ENCODE measurements at regions of chr22 and their contacts with region 1.

Region 1: DNA sequence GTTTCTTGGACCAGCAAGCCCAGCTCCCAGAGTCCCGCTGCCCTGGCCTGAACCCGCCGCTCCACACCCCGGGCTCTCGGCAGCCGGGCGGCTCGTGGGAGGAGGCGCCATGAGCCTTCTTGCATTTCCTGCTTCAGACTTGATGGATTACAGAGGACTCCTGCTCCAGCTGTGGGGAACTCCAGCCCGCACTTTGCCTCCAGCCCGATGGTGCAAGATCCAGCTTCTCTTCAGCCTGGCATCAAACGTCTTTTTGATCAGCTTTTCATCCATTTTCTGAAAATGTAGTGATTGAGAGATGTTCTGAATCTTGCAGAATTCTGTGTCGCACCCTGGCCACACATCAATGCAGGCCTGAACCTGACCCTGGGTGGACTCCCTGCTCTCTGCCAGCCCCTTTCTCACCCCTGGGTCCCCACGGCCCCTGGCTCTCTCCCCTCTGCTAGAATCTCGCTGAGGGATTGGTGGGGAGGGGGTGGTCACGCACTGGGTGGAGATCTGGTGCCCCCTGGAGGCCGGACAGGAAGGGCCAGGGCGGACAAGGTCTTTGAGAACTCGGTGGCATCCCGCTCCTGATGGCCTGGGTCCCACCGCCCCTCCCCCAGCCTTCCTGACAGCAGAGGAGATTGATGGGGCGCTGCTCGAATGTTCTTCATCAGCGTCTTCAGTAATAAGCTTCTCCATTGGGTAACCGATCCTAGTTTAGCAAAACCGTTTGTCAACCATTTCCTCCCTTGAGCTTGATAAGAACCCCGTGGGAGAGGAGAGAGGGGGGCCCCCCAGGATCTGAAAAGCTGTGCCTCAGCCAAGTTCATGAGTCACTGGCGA is 12.1 kb upstream of the NFAM1 start:
- DNase-seq: peak; percentile 67 to 74
- ATAC-seq: peak; percentile 84 to 90
- H3K4me3 ChIP-seq: peak overlapping the region; percentile 30
- H3K27ac ChIP-seq: peak overlapping the region; percentile 68 to 74
- H3K4me1 ChIP-seq: peaks cover 5% of the 10 kb centered on the region; the same call in 1 of the 3 replicates
- CTCF ChIP-seq: peak; percentile 63
- EP300 ChIP-seq: no peak
- POLR2A ChIP-seq: no peak
- RAD21 ChIP-seq: peak; percentile 73

Region 2: DNA sequence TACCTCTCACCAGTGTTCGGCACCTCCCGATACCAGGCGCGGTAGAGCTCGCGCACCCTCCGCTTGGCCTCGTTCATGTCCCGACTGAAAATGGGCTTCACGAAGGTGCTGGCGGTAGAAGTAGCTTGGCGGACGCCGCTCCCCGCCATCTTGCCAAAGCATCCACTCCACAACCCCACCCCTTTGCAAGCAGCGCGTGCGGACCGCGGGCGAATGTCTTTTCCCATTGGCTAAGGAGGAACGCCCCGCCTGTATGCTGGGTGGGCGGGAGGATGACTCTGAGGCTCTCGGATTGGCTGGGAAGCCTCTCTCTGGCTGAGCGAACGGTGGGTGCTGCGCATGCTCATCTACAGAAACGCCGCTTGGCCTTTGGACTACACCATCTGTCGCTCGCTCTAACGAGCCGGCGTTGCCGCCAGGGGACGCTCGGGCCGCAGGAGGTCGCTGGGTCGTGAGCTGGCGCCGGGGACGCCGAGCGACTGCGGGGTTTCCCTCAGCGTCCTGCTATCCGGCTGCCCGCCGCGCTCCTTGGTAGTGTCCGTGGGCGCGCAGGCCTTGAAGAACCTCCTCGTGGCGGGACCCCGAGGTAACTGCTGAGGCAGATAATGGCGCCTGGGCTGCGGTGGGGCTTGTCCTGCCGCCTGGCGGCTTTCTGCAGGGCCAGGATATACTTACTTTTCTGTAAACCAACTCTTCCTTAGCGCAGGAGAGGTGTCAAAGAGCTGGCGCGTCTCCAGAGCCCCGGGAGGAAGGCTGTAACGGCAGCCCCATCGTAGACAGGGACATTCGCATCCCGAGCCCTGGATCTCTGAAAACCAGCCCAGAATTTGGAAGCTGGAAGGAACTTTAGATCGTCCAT is 353.5 kb before region 1 on chr22 and contains the start of gene NDUFA6:
- CTCF ChIA-PET with region 1: interaction called, 32 read pairs
- POLR2A ChIA-PET with region 1: no interaction called
- DNase-seq: peak; percentile 91 to 98
- ATAC-seq: peak; percentile 96 to 98
- H3K4me3 ChIP-seq: peak within 1 kb of the TSS; percentile 70
- H3K27ac ChIP-seq: peak within 1 kb of the TSS; percentile 84 to 89
- H3K4me1 ChIP-seq: peaks cover 4% of the 10 kb centered on the region; the same call in 1 of the 3 replicates
- CTCF ChIP-seq: peak; percentile 87
- EP300 ChIP-seq: no peak
- POLR2A ChIP-seq: peak; percentile 88
- RAD21 ChIP-seq: peak; percentile 65 to 84
- polyA plus RNA-seq, gene NDUFA6: 70.7 and 99.0 TPM in 2 replicates

Region 3: GRCh38 chr22:42160830-42161696 is 283.2 kb before region 1 on chr22:
- CTCF ChIA-PET with region 1: interaction called, 14 read pairs
- POLR2A ChIA-PET with region 1: no interaction called
- DNase-seq: peak; percentile 28 to 81
- ATAC-seq: peak; percentile 49 to 68; a peak in 3 of 6 replicates
- H3K4me3 ChIP-seq: no peak overlapping the region
- H3K27ac ChIP-seq: peak overlapping the region; percentile 38 to 50; a peak in 3 of 6 replicates
- H3K4me1 ChIP-seq: peaks cover 13% of the 10 kb centered on the region
- CTCF ChIP-seq: no peak
- EP300 ChIP-seq: no peak
- POLR2A ChIP-seq: no peak
- RAD21 ChIP-seq: no peak

Region 4: GRCh38 chr22:42431401-42432019 is 12.8 kb before region 1 on chr22:
- CTCF ChIA-PET with region 1: interaction called, 16 read pairs
- POLR2A ChIA-PET with region 1: no interaction called
- DNase-seq: no peak
- ATAC-seq: no peak
- H3K4me3 ChIP-seq: no peak overlapping the region
- H3K27ac ChIP-seq: no peak overlapping the region
- H3K4me1 ChIP-seq: no peaks in the 10 kb centered on the region
- CTCF ChIP-seq: no peak
- EP300 ChIP-seq: no peak
- POLR2A ChIP-seq: no peak
- RAD21 ChIP-seq: no peak

Region 5: DNA sequence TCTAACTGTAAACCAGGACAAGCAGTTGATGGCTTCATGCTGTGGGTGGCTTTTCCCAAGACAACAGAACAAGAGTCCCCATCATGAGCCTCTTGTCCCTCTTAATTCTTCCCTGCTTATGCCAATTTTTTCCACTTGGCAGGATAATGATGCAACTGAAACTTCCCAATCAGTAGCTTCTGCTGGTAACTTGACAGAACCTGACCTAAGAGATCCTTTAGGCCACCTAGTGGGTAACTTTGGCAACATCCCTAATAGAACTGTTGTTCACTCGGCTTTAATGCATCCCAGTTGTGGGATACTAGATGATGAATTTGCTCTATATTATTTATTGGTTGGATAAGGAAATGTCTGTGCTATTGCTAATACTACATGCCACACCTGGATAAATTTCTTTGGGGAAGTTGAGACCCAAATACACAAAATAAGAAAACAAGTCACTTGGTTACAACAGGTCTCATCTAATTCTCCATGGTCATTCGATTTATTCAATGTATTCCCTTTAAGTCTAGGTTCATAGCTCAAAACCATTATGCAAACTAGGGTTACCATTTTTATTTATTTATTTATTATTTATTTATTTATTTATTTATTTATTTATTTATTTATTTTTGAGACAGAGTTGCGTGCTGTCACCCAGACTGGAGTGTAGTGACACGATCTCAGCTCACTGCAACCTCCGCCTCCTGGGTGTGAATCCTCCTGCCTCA is 29.3 kb after region 1 on chr22:
- CTCF ChIA-PET with region 1: interaction called, 16 read pairs
- POLR2A ChIA-PET with region 1: no interaction called
- DNase-seq: peak; percentile 43 to 62
- ATAC-seq: peak; percentile 83 to 93
- H3K4me3 ChIP-seq: no peak overlapping the region
- H3K27ac ChIP-seq: no peak overlapping the region
- H3K4me1 ChIP-seq: 0 out of 3 replicates have a peak, but pooled peaks cover 5% of the 10 kb centered on the region
- CTCF ChIP-seq: peak; percentile 48
- EP300 ChIP-seq: no peak
- POLR2A ChIP-seq: no peak
- RAD21 ChIP-seq: peak in 1 of 2 experiments; percentile 47; a peak in 2 of 5 replicates

Region 6: DNA sequence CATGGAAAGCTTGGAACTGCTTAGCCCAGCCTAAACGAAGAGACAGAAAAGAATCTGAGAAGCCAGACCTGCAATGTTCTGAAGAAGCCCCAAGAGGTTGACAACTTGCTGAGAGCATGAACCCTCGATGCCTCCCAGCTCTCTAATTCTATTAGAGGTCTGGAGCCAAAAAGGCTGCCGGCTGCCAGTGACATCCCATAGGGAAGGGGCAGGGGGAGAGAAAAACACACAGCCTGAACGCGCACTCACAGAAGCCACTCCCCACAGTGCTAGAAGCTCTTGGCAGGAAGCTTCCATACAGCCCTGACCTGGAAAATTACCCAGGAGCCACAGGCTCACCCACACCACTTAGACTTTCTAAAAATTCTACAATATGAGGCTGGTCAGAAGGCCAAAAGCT is 152.0 kb after region 1 on chr22:
- CTCF ChIA-PET with region 1: no interaction called
- POLR2A ChIA-PET with region 1: no interaction called
- DNase-seq: no peak
- ATAC-seq: no peak
- H3K4me3 ChIP-seq: no peak overlapping the region
- H3K27ac ChIP-seq: no peak overlapping the region
- H3K4me1 ChIP-seq: no peaks in the 10 kb centered on the region
- CTCF ChIP-seq: no peak
- EP300 ChIP-seq: no peak
- POLR2A ChIP-seq: no peak
- RAD21 ChIP-seq: no peak